ENCODE measurements at regions of chr2 and their contacts with region 1.

Region 1: DNA sequence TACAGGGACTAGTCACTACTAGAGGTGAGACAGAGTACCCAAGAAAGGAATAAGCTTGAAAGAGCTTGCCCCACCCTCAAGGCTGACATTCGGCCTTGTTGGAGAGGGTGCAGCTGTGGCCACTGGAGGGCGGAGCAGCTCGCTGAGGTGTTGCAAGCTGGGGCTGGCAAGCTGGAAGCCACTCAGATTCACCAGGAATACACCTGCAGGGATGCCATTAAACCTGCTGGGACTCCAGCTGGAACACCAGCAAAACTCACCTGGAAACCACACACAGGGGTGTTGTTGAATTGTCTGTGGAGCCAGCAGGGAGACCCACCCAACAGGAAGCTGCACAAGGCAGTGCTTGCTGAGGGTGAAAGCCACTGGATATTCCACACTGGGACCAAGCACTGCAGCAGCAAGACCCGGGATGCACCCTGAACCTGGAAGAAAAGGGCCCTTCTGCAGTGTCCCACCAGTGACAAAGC is 26.1 kb downstream of the KCTD18 start:
- DNase-seq: peak; percentile 34
- H3K4me3 ChIP-seq: no peak overlapping the region
- H3K27ac ChIP-seq: no peak overlapping the region
- H3K4me1 ChIP-seq: peaks cover 20 to 25% of the 10 kb centered on the region in 2 experiments
- H3K27me3 ChIP-seq: no peaks in the 10 kb centered on the region
- CTCF ChIP-seq: peak; percentile 34
- EP300 ChIP-seq: no peak
- RAD21 ChIP-seq: peak; percentile 30

Region 2: DNA sequence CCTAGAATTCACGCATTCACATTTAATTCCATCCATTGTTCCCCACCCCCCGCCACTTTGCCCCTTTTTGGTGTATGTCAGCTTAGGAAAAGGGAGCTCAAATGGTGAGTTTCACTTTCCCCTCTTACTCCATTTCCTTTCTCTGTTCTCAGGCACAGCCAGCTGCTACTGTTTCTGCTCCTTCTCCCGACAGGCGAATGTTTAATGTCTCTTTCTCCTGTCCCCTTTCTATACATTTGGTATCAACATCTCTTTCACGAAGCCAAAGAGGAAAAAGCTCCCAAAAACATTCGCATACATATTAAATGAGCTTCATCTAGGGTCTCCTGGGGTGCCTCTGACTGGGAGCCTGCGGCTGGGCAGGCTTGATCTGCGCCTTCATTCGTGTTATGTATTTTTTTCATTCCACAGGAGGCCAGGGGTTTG is 901.8 kb before region 1 on chr2:
- CTCF ChIA-PET with region 1: no interaction called
- POLR2A ChIA-PET with region 1: no interaction called
- DNase-seq: no peak
- H3K4me3 ChIP-seq: peak overlapping the region in 1 of 2 experiments; percentile 53; a peak in 1 of 4 replicates
- H3K27ac ChIP-seq: no peak overlapping the region
- H3K4me1 ChIP-seq: no peaks in the 10 kb centered on the region
- H3K27me3 ChIP-seq: peaks cover 33% of the 10 kb centered on the region; the same call in 1 of the 2 replicates
- CTCF ChIP-seq: no peak
- EP300 ChIP-seq: no peak
- RAD21 ChIP-seq: no peak

Region 3: DNA sequence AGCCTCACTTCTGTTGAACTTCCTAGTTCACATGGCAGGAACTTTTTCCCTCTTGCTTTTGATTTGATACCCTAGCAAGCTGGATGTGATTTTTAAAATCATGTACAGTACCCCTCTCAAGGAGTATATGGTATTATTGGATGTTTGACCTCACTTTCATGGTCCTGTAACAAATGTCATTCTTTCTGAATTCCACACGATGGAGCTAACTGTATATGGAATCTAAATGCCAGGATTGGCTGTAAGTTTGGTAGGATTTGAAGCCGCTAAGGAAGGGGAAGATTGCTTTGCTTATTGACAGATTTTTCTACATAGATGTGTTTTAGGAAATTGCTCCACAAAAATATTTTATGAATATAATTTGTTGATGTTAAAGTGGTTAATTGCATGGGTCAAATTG is 510.1 kb before region 1 on chr2:
- CTCF ChIA-PET with region 1: interaction called, 96 read pairs
- POLR2A ChIA-PET with region 1: no interaction called
- DNase-seq: peak; percentile 40
- H3K4me3 ChIP-seq: no peak overlapping the region
- H3K27ac ChIP-seq: no peak overlapping the region
- H3K4me1 ChIP-seq: peaks cover 3 to 7% of the 10 kb centered on the region in 2 experiments; a peak in 2 of 4 replicates
- H3K27me3 ChIP-seq: no peaks in the 10 kb centered on the region
- CTCF ChIP-seq: peak; percentile 72
- EP300 ChIP-seq: no peak
- RAD21 ChIP-seq: peak; percentile 91

Region 4: GRCh38 chr2:199985625-199986207 is 498.0 kb before region 1 on chr2:
- CTCF ChIA-PET with region 1: interaction called, 39 read pairs
- POLR2A ChIA-PET with region 1: no interaction called
- DNase-seq: peak; percentile 38
- H3K4me3 ChIP-seq: peak overlapping the region in 1 of 2 experiments; percentile 24; a peak in 1 of 4 replicates
- H3K27ac ChIP-seq: no peak overlapping the region
- H3K4me1 ChIP-seq: no peaks in the 10 kb centered on the region; a peak in 2 of 4 replicates
- H3K27me3 ChIP-seq: no peaks in the 10 kb centered on the region
- CTCF ChIP-seq: peak; percentile 67
- EP300 ChIP-seq: no peak
- RAD21 ChIP-seq: peak; percentile 74

Region 5: GRCh38 chr2:200471324-200471848 is 12.4 kb before region 1 on chr2:
- CTCF ChIA-PET with region 1: interaction called, 111 read pairs
- POLR2A ChIA-PET with region 1: interaction called, 4 read pairs
- DNase-seq: peak; percentile 71
- H3K4me3 ChIP-seq: no peak overlapping the region
- H3K27ac ChIP-seq: no peak overlapping the region
- H3K4me1 ChIP-seq: peaks cover 0 to 11% of the 10 kb centered on the region in 2 experiments; a peak in 1 of 4 replicates
- H3K27me3 ChIP-seq: no peaks in the 10 kb centered on the region
- CTCF ChIP-seq: peak; percentile 61
- EP300 ChIP-seq: no peak
- RAD21 ChIP-seq: peak; percentile 87

Region 6: DNA sequence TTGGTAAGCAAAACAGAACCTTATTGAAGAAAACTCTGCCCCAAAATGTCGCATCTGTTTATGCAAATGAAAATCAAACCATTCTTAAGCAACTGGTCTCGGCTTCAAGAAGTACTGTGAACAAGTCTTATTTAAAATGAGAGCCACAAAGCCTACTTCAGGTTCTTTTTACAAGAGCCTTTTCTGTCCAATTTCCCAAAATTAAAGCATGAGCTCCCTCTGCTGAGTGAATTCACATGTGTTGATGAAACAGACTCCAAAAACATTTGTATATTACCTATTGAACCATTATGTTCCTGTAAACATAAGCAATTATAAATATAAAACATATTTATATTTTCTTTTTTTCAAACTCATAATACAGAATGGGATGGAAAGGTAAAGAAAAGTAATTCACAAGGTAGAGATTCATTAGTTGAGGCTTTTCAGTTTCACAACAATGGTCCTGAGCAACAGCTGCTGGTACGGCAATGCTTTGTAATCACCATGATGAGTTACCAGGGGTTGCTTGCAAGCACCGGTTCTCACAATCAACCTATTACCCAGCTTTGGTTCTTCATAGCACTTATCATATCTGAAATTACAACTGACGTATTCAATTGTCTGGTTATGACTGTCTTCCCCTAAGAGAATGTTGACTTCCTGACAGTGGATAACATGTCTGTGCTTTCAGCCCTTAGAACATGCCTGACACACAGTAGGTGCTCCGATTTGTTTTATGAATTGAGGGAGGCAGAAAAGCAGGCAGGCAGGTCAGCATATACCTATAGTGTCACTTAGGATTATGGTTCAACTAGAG is 219.6 kb after region 1 on chr2:
- CTCF ChIA-PET with region 1: interaction called, 14 read pairs
- POLR2A ChIA-PET with region 1: no interaction called
- DNase-seq: peak; percentile 15
- H3K4me3 ChIP-seq: no peak overlapping the region
- H3K27ac ChIP-seq: no peak overlapping the region
- H3K4me1 ChIP-seq: no peaks in the 10 kb centered on the region; a peak in 2 of 4 replicates
- H3K27me3 ChIP-seq: no peaks in the 10 kb centered on the region
- CTCF ChIP-seq: peak; percentile 75
- EP300 ChIP-seq: no peak
- RAD21 ChIP-seq: peak; percentile 93